Mammary epithelial cell (primary cell): ENCODE measurements at regions of chr18 and their contacts with region 1.

Region 1: GRCh38 chr18:36798738-36799473 is 29.9 kb downstream of the TPGS2 start:
- DNase-seq: no peak
- H3K4me3 ChIP-seq: no peak overlapping the region
- H3K27ac ChIP-seq: no peak overlapping the region
- H3K4me1 ChIP-seq: no peaks in the 10 kb centered on the region
- H3K27me3 ChIP-seq: no peaks in the 10 kb centered on the region
- CTCF ChIP-seq: no peak

Region 2: GRCh38 chr18:36543991-36544725 is 254.7 kb before region 1 on chr18:
- CTCF ChIA-PET with region 1: interaction called, 24 read pairs
- dilution Hi-C with region 1: no loop called
- in situ Hi-C with region 1: no loop called
- intact Hi-C with region 1: no loop called
- DNase-seq: peak; percentile 92
- H3K4me3 ChIP-seq: no peak overlapping the region
- H3K27ac ChIP-seq: peak overlapping the region; percentile 55
- H3K4me1 ChIP-seq: peaks cover 20% of the 10 kb centered on the region
- H3K27me3 ChIP-seq: no peaks in the 10 kb centered on the region
- CTCF ChIP-seq: no peak